Caco-2 (cell line): ENCODE measurements at regions of chr7 and their contacts with region 1.

Region 1: DNA sequence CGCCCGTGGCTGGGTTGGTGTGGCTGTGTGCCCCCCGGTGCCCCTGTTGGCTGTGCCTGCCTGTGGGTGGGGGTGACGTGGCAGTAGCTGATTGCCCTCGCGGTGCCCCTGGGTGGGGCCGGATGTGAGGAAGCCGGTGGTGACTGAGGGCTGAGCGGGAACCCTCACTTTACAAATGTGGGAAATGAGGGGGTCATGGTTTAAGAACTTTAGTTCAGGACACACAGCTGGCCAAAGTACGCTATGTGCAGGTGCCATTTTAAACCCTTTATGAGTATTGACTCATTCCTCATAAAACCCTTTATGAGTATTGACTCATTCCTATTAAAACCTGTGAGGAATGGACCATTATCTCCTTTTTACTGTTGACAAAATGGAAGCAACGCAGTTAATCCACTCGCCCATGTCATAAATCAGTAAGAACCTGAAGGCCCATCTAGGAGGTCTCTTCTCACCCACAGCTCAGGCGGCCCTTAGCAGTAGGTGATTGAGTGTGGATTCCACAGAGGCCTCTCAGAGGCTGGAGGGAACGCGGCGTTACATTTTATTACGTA is 290.1 kb upstream of the COBL start:
- DNase-seq: peak; percentile 79 to 94
- H3K4me3 ChIP-seq: no peak overlapping the region
- H3K4me3 Mint-ChIP-seq: peak overlapping the region; percentile 59
- H3K27ac Mint-ChIP-seq: peak overlapping the region; percentile 88
- H3K4me1 ChIP-seq: peaks cover 28% of the 10 kb centered on the region
- H3K4me1 Mint-ChIP-seq: peaks cover 9% of the 10 kb centered on the region
- H3K27me3 ChIP-seq: no peaks in the 10 kb centered on the region
- H3K27me3 Mint-ChIP-seq: no peaks in the 10 kb centered on the region
- CTCF ChIP-seq: no peak

Region 2: DNA sequence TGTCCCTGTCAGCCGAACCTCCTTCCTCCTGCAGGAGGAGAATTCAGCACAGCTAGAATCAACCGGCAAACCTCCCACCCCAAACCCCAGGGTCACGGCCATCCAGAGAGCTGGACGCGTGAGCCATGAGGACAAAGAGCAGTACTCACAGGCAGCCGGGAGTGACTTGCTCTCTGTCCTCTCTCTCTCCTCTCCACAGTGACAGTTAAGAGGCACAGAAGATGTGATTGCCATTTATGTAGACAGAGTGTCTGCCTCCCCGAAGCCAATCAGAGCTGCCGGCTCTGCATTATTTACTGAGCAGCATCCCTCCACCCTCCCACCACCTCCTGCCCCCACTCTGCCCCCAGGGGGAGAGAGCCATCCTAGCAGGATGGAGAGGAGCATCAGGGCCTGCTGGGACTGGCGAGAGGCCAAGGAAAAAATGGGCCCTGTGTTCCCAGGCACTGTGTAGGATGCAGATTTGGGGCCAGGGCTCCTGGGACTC is 1045.8 kb before region 1 on chr7:
- CTCF ChIA-PET with region 1: no interaction called
- POLR2A ChIA-PET with region 1: no interaction called
- intact Hi-C with region 1: loop called (anchors 10 kb)
- DNase-seq: no peak
- H3K4me3 ChIP-seq: no peak overlapping the region
- H3K4me3 Mint-ChIP-seq: no peak overlapping the region
- H3K27ac Mint-ChIP-seq: no peak overlapping the region
- H3K4me1 ChIP-seq: peaks cover 46% of the 10 kb centered on the region
- H3K4me1 Mint-ChIP-seq: peaks cover 56% of the 10 kb centered on the region
- H3K27me3 ChIP-seq: no peaks in the 10 kb centered on the region
- H3K27me3 Mint-ChIP-seq: no peaks in the 10 kb centered on the region
- CTCF ChIP-seq: no peak

Region 3: DNA sequence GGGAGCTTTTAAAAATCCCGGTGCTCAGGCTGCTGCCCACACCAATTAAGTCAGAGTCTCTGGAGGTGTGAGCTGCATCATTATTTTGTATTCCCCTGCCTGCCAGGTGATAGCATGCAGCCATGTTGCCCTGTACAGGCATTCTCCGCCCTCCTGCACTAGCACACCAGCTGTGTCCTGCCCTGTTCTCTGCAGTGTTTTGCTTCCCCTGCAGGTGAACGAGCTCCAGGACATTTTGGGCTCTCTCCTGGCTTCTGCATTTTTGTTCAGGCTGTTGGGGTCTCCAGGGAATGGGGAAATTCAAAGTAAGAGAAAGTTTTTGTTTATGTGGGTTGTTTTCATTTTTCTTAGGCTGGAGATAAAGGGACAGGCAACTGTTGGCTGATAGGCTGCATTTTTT is 19.1 kb before region 1 on chr7:
- CTCF ChIA-PET with region 1: no interaction called
- POLR2A ChIA-PET with region 1: no interaction called
- intact Hi-C with region 1: loop called (anchors 1 kb)
- DNase-seq: no peak
- H3K4me3 ChIP-seq: no peak overlapping the region
- H3K4me3 Mint-ChIP-seq: no peak overlapping the region
- H3K27ac Mint-ChIP-seq: no peak overlapping the region
- H3K4me1 ChIP-seq: 0 out of 2 replicates have a peak, but pooled peaks cover 6% of the 10 kb centered on the region
- H3K4me1 Mint-ChIP-seq: peaks cover 12% of the 10 kb centered on the region
- H3K27me3 ChIP-seq: no peaks in the 10 kb centered on the region
- H3K27me3 Mint-ChIP-seq: no peaks in the 10 kb centered on the region
- CTCF ChIP-seq: peak in 1 of 2 experiments; percentile 6

Region 4: GRCh38 chr7:51634025-51634424 is 27.3 kb after region 1 on chr7:
- CTCF ChIA-PET with region 1: no interaction called
- POLR2A ChIA-PET with region 1: no interaction called
- intact Hi-C with region 1: loop called (anchors 2 kb)
- DNase-seq: no peak
- H3K4me3 ChIP-seq: no peak overlapping the region
- H3K4me3 Mint-ChIP-seq: no peak overlapping the region
- H3K27ac Mint-ChIP-seq: peak overlapping the region; percentile 27
- H3K4me1 ChIP-seq: peaks cover 17% of the 10 kb centered on the region
- H3K4me1 Mint-ChIP-seq: peaks cover 15% of the 10 kb centered on the region
- H3K27me3 ChIP-seq: no peaks in the 10 kb centered on the region; the same call in 1 of the 2 replicates
- H3K27me3 Mint-ChIP-seq: no peaks in the 10 kb centered on the region
- CTCF ChIP-seq: no peak

Region 5: DNA sequence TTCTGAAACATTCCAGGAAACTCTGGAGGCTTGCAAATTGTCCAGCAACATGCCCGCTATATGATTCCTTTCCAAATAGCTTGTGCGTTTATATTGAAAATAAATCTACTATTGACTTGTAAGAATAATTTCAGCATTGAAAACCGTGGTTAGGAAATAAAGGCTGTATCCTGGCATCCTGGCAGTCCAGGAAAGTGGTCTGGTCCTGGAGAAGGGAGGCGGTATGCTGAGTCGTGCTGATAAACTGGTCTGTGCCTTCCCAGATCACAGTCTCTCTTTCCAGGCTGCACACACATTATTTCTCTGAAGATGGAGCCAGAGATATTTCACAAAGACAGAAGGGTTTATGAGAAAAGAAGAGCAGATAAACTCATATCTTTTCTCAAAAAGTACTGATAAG is 60.1 kb after region 1 on chr7:
- CTCF ChIA-PET with region 1: no interaction called
- POLR2A ChIA-PET with region 1: no interaction called
- intact Hi-C with region 1: loop called (anchors 1 kb)
- DNase-seq: peak in 1 of 2 experiments; percentile 33
- H3K4me3 ChIP-seq: no peak overlapping the region
- H3K4me3 Mint-ChIP-seq: peak overlapping the region; percentile 48
- H3K27ac Mint-ChIP-seq: no peak overlapping the region
- H3K4me1 ChIP-seq: peaks cover 16% of the 10 kb centered on the region
- H3K4me1 Mint-ChIP-seq: peaks cover 8% of the 10 kb centered on the region
- H3K27me3 ChIP-seq: no peaks in the 10 kb centered on the region
- H3K27me3 Mint-ChIP-seq: peaks cover 2% of the 10 kb centered on the region
- CTCF ChIP-seq: no peak

Region 6: DNA sequence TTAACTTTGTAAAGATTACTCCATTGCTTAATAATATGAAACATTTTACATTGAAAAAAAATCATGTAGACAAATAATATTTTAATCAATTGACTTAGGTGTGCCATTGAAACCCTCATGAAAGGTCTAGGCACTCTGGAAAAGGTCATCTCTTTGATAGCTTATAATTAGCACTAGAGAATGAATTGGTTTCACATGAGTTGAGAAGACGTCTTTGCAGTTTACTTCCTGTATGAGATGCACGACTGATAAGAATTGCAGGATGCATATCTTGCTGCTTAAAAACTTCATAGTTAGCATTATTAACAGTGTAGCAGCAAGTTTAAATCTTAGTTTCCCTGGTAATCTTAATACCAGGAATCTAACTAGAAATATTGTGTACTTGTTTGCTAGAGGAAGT is 324.2 kb after region 1 on chr7:
- CTCF ChIA-PET with region 1: no interaction called
- POLR2A ChIA-PET with region 1: no interaction called
- intact Hi-C with region 1: no loop called
- DNase-seq: no peak
- H3K4me3 ChIP-seq: no peak overlapping the region
- H3K4me3 Mint-ChIP-seq: no peak overlapping the region
- H3K27ac Mint-ChIP-seq: no peak overlapping the region
- H3K4me1 ChIP-seq: no peaks in the 10 kb centered on the region
- H3K4me1 Mint-ChIP-seq: peaks cover 10% of the 10 kb centered on the region
- H3K27me3 ChIP-seq: no peaks in the 10 kb centered on the region
- H3K27me3 Mint-ChIP-seq: no peaks in the 10 kb centered on the region
- CTCF ChIP-seq: no peak

Region 7: DNA sequence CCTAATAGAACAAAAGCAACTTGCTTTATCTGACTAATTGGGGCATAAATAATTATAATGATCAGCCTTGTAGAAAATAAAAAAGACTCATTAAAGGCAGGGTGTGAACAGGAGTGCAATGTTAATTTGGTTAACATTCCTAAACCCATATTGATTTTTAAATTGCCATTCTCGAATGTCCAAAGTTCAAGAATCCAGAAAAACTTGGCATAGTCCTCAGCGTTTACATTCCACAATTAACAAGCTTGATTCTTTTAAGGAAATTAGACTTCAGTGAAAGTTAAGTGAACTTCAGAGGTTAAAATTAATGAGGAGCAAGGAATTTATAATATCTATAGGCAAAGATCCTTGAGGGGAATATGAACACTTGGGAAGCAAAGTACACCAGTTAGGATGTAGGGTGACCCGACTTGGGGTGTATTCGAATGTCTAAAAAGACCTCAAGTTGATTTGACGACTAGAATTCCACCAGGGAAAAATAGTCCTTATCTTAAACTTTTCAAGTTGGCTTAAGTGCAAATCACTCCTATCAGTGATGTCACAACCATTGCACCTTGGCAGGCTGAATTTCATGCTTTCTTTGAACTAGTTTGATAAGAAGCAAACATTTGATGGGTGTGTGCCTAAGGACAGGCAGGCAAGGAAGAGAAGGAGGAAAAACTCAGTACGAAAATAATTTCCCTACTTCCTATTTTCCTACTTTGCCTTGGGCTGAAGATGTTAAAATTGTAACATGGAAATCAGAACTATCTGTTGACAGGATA is 540.4 kb after region 1 on chr7:
- CTCF ChIA-PET with region 1: no interaction called
- POLR2A ChIA-PET with region 1: no interaction called
- intact Hi-C with region 1: loop called (anchors 5 kb)
- DNase-seq: peak; percentile 77 to 79
- H3K4me3 ChIP-seq: no peak overlapping the region
- H3K4me3 Mint-ChIP-seq: peak overlapping the region; percentile 46
- H3K27ac Mint-ChIP-seq: peak overlapping the region; percentile 88
- H3K4me1 ChIP-seq: peaks cover 61% of the 10 kb centered on the region
- H3K4me1 Mint-ChIP-seq: peaks cover 16% of the 10 kb centered on the region
- H3K27me3 ChIP-seq: no peaks in the 10 kb centered on the region
- H3K27me3 Mint-ChIP-seq: no peaks in the 10 kb centered on the region
- CTCF ChIP-seq: no peak